ENCODE measurements at regions of chr7 and their contacts with region 1.

Region 1: DNA sequence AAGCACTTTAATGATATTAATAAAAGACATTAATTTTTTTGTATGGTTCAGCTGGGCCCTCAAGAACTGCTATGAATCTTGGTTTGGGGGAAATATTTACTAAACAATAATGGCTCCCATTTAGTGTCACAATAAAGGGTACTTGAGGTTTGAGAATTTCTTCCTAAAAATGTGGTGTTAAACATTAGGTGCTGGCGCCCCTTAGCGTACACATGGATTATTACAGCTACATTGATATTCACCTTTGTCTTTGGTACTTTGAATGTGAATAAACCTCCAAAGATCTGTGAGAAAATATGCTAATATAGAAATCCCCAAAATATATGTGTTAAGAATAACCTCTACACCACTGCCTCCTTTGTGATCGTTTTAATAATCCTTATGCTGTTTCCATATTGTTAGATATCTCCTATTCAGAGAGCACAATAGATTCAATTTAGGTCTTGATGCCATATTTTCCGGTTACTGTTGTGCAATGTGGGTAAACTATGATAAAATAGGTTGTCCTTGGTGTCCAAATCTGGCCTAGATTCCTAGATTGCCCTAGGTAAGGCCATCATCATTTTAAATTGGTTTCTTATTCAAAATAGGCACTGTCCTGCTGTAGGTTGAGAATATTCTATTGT is 161.8 kb upstream of the CACNA2D1 start:
- DNase-seq: peak; percentile 13
- ATAC-seq: no peak
- H3K4me3 Mint-ChIP-seq: no peak overlapping the region
- H3K27ac Mint-ChIP-seq: no peak overlapping the region
- H3K4me1 Mint-ChIP-seq: no peaks in the 10 kb centered on the region
- H3K27me3 Mint-ChIP-seq: no peaks in the 10 kb centered on the region

Region 2: GRCh38 chr7:82729172-82730030 is 124.0 kb after region 1 on chr7:
- CTCF ChIA-PET with region 1: interaction called, 3 read pairs
- POLR2A ChIA-PET with region 1: no interaction called
- intact Hi-C with region 1: loop called in 1 of 2 experiments (anchors 10 kb)
- DNase-seq: no peak
- ATAC-seq: no peak
- H3K4me3 Mint-ChIP-seq: no peak overlapping the region
- H3K27ac Mint-ChIP-seq: no peak overlapping the region
- H3K4me1 Mint-ChIP-seq: no peaks in the 10 kb centered on the region
- H3K27me3 Mint-ChIP-seq: no peaks in the 10 kb centered on the region

Measured in activated CD4-positive, alpha-beta T cell treated with anti-CD3 and anti-CD28 coated beads for 36 hours (primary cell).